Ascending aorta (tissue), 2 donors: ENCODE measurements at regions of chr19 and their contacts with region 1.

Region 1: DNA sequence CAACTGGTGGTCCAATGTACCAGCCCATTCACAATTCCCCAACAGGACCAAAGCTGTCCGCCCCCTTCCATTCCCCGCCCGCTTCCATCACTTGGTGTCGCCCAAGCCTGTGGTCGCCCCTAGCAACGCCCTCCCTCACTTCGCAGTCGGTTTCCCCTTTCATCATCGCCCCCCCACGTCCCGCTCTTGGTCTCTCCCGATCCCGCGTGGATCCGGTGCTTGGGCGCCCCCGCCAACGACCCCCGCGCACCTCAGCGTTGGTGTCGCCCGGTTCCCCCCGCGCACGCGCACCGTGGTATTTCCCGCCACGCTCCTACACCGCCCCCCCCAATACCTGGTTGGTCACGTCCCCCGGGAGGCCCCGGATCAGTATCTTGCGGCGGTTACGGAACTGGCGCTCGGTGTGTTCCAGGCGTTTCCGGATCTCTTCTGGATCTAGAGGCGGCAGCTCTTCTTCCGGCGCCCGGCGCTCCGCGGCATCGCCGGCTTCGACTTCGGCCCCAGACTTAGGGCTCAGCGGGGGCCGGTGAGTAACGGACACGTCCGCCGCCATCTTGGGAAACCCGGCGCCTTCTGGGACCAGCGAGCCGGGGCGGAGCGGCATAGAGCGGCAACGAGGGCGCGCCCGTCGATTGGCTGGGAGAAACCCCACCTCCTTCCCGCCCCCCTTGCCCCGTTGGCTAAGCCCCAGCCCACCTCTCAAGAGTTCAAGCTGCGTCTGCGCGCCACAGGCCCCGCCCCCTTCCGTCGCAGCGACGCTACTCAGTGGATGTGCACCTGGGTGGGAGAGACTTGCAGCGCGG is at the start of gene RAVER1:
- DNase-seq: peak; percentile 86 to 99
- H3K4me3 ChIP-seq: peak within 1 kb of the TSS; percentile 66 to 89
- H3K27ac ChIP-seq: peak within 1 kb of the TSS; percentile 87 to 94
- H3K4me1 ChIP-seq: peaks cover 4 to 12% of the 10 kb centered on the region in 2 donors
- H3K27me3 ChIP-seq: no peaks in the 10 kb centered on the region
- CTCF ChIP-seq: no peak
- total RNA-seq, gene RAVER1: 51.8 TPM

Region 2: GRCh38 chr19:10120538-10121189 is 212.5 kb before region 1 on chr19:
- intact Hi-C with region 1: loop called (anchors 10 kb)
- DNase-seq: peak in 1 of 2 donors; percentile 80
- H3K4me3 ChIP-seq: peak overlapping the region in 1 of 2 donors; percentile 99
- H3K27ac ChIP-seq: peak overlapping the region; percentile 84 to 87
- H3K4me1 ChIP-seq: peaks cover 15 to 27% of the 10 kb centered on the region in 2 donors
- H3K27me3 ChIP-seq: no peaks in the 10 kb centered on the region
- CTCF ChIP-seq: no peak

Region 3: GRCh38 chr19:10219678-10220077 is 113.5 kb before region 1 on chr19:
- intact Hi-C with region 1: no loop called
- DNase-seq: no peak
- H3K4me3 ChIP-seq: no peak overlapping the region
- H3K27ac ChIP-seq: no peak overlapping the region
- H3K4me1 ChIP-seq: no peaks in the 10 kb centered on the region
- H3K27me3 ChIP-seq: no peaks in the 10 kb centered on the region
- CTCF ChIP-seq: no peak

Region 4: DNA sequence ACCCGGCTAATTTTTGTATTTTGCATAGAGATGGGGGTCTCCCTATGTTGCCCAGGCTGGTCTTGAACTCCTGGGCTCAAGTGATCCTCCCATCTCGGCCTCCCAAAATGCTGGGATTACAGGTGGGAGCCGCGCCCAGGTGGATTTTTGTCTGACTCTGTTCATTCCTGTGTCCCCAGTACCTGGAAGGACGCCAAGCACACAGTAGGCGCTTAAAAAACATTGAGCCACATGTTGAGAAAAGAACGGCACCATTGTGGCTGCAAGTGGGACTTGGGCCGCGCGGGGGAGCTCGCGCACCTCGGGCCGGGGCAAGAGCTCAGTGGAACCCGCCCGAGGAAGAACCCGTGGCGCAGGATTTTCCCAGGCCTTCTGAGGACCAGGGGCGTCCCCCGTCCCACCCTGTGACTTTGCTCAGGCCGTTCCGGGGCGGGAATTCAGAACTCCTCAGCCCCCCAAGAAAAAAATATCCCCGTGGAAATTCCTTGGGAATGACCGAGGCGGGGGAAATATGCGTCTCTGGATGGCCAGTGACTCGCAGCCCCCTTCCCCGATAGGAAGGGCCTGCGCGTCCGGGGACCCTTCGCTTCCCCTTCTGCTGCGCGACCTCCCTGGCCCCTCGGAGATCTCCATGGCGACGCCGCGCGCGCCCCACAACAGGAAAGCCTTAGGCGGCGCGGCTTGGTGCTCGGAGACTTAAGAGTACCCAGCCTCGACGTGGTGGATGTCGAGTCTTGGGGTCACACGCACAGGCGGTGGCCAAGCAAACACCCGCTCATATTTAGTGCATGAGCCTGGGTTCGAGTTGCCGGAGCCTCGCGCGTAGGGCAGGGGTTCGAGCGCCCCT is 63.6 kb before region 1 on chr19:
- intact Hi-C with region 1: loop called (anchors 2 kb)
- DNase-seq: peak; percentile 47 to 92
- H3K4me3 ChIP-seq: peak overlapping the region; percentile 50 to 59
- H3K27ac ChIP-seq: peak overlapping the region; percentile 69 to 81
- H3K4me1 ChIP-seq: peaks cover 7 to 15% of the 10 kb centered on the region in 2 donors
- H3K27me3 ChIP-seq: no peaks in the 10 kb centered on the region
- CTCF ChIP-seq: peak; percentile 93 to 99 (median 95)

Region 5: DNA sequence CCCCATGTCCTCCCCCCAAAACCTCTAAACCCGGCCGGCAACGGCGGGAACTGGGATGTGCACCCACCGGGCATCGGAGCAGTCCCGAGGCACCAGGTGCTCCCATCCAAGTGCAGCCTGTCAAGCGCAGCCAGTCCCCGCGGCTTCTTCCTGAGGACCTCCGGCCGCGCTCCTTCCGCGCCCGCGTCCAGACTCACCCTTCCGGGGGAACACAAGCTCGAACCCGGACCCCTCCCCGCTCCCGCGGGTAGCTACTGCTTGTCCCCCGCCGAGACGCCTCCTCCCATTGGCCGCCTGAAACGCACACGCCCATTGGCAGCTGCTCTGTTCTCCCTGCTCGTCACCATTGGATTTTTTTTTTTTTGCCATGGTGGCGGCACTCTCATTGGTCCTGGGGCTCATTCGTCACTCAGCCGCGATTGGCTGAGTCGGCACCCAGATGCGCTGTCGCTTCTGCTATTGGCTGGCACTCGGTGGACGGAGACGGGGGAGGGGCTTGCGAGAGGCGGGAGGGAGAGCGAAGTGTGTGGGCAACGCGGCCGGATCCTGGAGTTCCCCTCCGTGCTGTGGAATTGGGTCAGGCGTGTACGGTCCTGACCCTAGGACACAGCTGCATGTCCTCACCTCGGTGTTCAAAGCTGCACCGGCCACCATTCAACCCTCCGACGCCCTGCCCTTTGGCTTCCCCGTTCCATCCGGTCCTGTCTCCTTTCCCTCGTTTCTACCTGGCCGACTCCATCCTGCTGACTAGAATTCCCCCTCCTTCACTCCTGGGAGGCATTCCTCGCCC is 47.4 kb after region 1 on chr19 and contains the start of gene TYK2:
- intact Hi-C with region 1: loop called (anchors 1 kb)
- DNase-seq: peak; percentile 96 to 98
- H3K4me3 ChIP-seq: peak within 1 kb of the TSS; percentile 86 to 98
- H3K27ac ChIP-seq: peak within 1 kb of the TSS; percentile 66 to 73
- H3K4me1 ChIP-seq: peaks cover 0 to 14% of the 10 kb centered on the region in 2 donors
- H3K27me3 ChIP-seq: no peaks in the 10 kb centered on the region
- CTCF ChIP-seq: no peak
- total RNA-seq, gene TYK2: 80.7 TPM